CD4-positive, alpha-beta T cell (primary cell): ENCODE measurements at regions of chr9 and their contacts with region 1.

Region 1: GRCh38 chr9:33415501-33416038 is 13.2 kb upstream of the AQP7 start:
- DNase-seq: peak; percentile 91 to 99 (median 95)
- ATAC-seq: peak; percentile 88
- H3K4me3 ChIP-seq: peak overlapping the region; percentile 25
- H3K4me3 Mint-ChIP-seq: peak overlapping the region; percentile 79
- H3K27ac ChIP-seq: peak overlapping the region; percentile 54 to 58
- H3K27ac Mint-ChIP-seq: peak overlapping the region; percentile 93
- H3K4me1 ChIP-seq: peaks cover 64% of the 10 kb centered on the region
- H3K4me1 Mint-ChIP-seq: peaks cover 45% of the 10 kb centered on the region
- H3K27me3 ChIP-seq: no peaks in the 10 kb centered on the region
- H3K27me3 Mint-ChIP-seq: no peaks in the 10 kb centered on the region
- CTCF ChIP-seq: peak; percentile 83

Region 2: GRCh38 chr9:33167046-33167808 is 248.3 kb before region 1 on chr9 and contains the start of gene B4GALT1:
- CTCF ChIA-PET with region 1: no interaction called
- POLR2A ChIA-PET with region 1: no interaction called
- intact Hi-C with region 1: no loop called
- DNase-seq: peak; percentile 90 to 99 (median 97)
- ATAC-seq: peak; percentile 77
- H3K4me3 ChIP-seq: peak within 1 kb of the TSS; percentile 85
- H3K4me3 Mint-ChIP-seq: peak within 1 kb of the TSS; percentile 93
- H3K27ac ChIP-seq: peak within 1 kb of the TSS; percentile 89 to 94
- H3K27ac Mint-ChIP-seq: peak within 1 kb of the TSS; percentile 97
- H3K4me1 ChIP-seq: peaks cover 54% of the 10 kb centered on the region
- H3K4me1 Mint-ChIP-seq: peaks cover 61% of the 10 kb centered on the region
- H3K27me3 ChIP-seq: no peaks in the 10 kb centered on the region
- H3K27me3 Mint-ChIP-seq: no peaks in the 10 kb centered on the region
- CTCF ChIP-seq: no peak
- total RNA-seq, gene B4GALT1: 74.7 to 77.0 TPM

Region 3: GRCh38 chr9:33374634-33375213 is 40.8 kb before region 1 on chr9:
- CTCF ChIA-PET with region 1: interaction called, 21 read pairs
- POLR2A ChIA-PET with region 1: interaction called, 24 read pairs
- intact Hi-C with region 1: loop called in 1 of 2 experiments (anchors 1 kb)
- DNase-seq: peak; percentile 48 to 82 (median 62)
- ATAC-seq: peak; percentile 96
- H3K4me3 ChIP-seq: peak overlapping the region; percentile 17
- H3K4me3 Mint-ChIP-seq: peak overlapping the region; percentile 56
- H3K27ac ChIP-seq: no peak overlapping the region
- H3K27ac Mint-ChIP-seq: peak overlapping the region; percentile 45
- H3K4me1 ChIP-seq: peaks cover 8% of the 10 kb centered on the region
- H3K4me1 Mint-ChIP-seq: peaks cover 16% of the 10 kb centered on the region
- H3K27me3 ChIP-seq: no peaks in the 10 kb centered on the region
- H3K27me3 Mint-ChIP-seq: no peaks in the 10 kb centered on the region
- CTCF ChIP-seq: peak; percentile 86

Region 4: DNA sequence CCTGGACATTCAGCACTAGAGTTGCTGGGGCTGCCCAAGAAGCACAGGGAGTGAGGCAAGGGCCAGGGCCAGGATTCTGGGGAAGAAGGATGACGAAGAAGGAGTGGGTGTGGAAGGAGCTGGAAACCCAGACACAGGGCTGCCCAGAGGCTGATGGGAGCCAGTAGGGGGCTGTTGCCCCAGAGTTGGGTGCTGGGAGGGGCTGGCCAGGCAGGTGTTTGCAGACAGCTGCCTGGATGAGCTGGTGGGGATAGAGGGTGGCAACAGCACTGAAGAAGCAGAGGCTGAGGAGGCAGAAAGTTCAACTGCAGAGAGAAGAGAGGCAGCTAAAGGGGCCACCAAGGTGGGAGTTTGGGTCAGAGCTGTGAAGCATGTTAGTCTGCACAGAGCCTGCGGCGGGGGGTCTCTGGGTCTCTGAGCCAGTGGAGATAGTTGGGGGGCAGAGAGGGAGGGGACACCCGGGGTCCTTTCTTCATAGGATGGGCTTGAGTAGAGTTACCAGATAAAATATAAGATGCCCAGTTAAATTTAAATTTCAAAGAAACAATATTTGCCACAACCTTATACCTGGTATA is 10.7 kb before region 1 on chr9:
- CTCF ChIA-PET with region 1: interaction called, 25 read pairs
- POLR2A ChIA-PET with region 1: interaction called, 24 read pairs
- intact Hi-C with region 1: loop called (anchors 1 kb)
- DNase-seq: peak in 1 of 14 experiments; percentile 11
- ATAC-seq: no peak
- H3K4me3 ChIP-seq: no peak overlapping the region
- H3K4me3 Mint-ChIP-seq: no peak overlapping the region
- H3K27ac ChIP-seq: no peak overlapping the region
- H3K27ac Mint-ChIP-seq: peak overlapping the region; percentile 45
- H3K4me1 ChIP-seq: peaks cover 14% of the 10 kb centered on the region
- H3K4me1 Mint-ChIP-seq: peaks cover 6% of the 10 kb centered on the region
- H3K27me3 ChIP-seq: no peaks in the 10 kb centered on the region
- H3K27me3 Mint-ChIP-seq: no peaks in the 10 kb centered on the region
- CTCF ChIP-seq: no peak

Region 5: DNA sequence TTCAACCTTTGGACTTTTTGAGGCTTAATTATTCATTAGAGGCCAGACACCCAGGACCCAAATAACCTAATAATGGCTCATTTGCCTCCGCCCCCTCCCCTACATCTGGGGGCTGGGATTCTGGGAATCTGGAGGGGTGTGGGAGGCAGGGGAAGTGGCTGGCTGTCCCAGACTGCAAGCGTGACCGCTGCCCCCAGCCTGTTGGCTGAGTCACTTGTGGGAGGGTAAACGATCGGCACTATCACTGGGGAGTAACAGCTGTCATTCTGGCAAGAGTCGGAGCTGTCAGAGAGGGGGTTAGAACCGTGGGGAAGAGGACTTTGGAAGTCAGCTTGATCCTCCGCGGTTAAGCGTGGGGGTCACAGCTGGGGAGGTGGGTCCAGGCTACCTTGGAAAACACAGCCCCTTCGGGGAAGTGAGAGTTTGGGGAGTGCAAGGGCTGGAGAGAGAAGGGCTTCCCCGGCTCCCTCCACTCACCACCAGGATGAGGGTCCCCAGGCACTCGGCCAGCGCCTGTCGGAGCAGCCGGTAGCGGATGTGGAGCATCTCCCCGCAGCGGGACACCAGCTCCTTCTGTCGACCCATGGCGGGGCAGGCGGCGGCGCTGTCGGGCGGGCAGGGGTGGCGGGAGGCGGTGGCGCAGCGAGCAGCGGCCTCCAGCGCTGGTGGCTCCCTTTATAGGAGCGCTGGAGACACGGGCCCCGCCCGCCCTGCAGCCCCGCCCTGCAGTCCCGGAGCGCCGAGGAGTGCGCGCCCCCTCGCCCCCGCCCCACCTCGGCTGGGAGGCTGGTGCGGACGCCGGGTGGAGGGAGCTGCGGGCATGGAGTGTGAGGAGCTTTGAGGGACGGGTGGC is 31.6 kb after region 1 on chr9 and contains the start of gene AQP3:
- CTCF ChIA-PET with region 1: interaction called, 40 read pairs
- POLR2A ChIA-PET with region 1: interaction called, 98 read pairs
- intact Hi-C with region 1: loop called (anchors 1 to 2 kb)
- DNase-seq: peak; percentile 63 to 89 (median 75)
- ATAC-seq: peak; percentile 51
- H3K4me3 ChIP-seq: peak within 1 kb of the TSS; percentile 90
- H3K4me3 Mint-ChIP-seq: peak within 1 kb of the TSS; percentile 97
- H3K27ac ChIP-seq: peak within 1 kb of the TSS; percentile 83 to 91
- H3K27ac Mint-ChIP-seq: peak within 1 kb of the TSS; percentile 99
- H3K4me1 ChIP-seq: peaks cover 69% of the 10 kb centered on the region
- H3K4me1 Mint-ChIP-seq: peaks cover 52% of the 10 kb centered on the region
- H3K27me3 ChIP-seq: no peaks in the 10 kb centered on the region
- H3K27me3 Mint-ChIP-seq: no peaks in the 10 kb centered on the region
- CTCF ChIP-seq: peak; percentile 53
- total RNA-seq, gene AQP3: 99.8 to 106 TPM

Region 6: GRCh38 chr9:33452828-33453271 is 37.3 kb after region 1 on chr9:
- CTCF ChIA-PET with region 1: interaction called, 40 read pairs
- POLR2A ChIA-PET with region 1: interaction called, 98 read pairs
- intact Hi-C with region 1: no loop called
- DNase-seq: peak in 11 of 14 experiments; percentile 27 to 77 (median 52)
- ATAC-seq: peak; percentile 50
- H3K4me3 ChIP-seq: no peak overlapping the region
- H3K4me3 Mint-ChIP-seq: peak overlapping the region; percentile 54
- H3K27ac ChIP-seq: peak overlapping the region; percentile 4 to 21
- H3K27ac Mint-ChIP-seq: peak overlapping the region; percentile 90
- H3K4me1 ChIP-seq: peaks cover 72% of the 10 kb centered on the region
- H3K4me1 Mint-ChIP-seq: peaks cover 60% of the 10 kb centered on the region
- H3K27me3 ChIP-seq: no peaks in the 10 kb centered on the region
- H3K27me3 Mint-ChIP-seq: no peaks in the 10 kb centered on the region
- CTCF ChIP-seq: peak; percentile 70

Region 7: DNA sequence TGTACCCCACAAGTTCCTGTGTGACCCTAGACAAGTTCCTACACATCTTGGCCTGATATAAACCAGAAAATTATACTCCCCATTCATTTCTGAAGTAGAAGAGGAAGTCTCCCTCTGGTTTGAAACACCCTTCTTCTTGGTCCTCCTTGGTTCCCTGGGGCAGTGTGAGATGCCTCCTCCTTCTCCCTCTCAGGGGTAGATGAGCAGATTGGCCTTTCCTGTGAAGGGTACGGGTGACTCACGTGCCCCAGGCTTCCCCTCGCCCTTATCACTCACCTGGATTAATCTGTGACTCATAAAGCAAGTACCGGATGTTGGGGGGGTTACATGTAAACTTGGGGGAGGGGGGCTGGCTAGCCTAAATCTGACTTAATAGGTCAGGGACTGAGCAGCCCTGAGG is 42.9 kb after region 1 on chr9:
- CTCF ChIA-PET with region 1: interaction called, 39 read pairs
- POLR2A ChIA-PET with region 1: interaction called, 24 read pairs
- intact Hi-C with region 1: no loop called
- DNase-seq: peak in 13 of 14 experiments; percentile 47 to 87 (median 66)
- ATAC-seq: peak; percentile 81
- H3K4me3 ChIP-seq: no peak overlapping the region
- H3K4me3 Mint-ChIP-seq: peak overlapping the region; percentile 81
- H3K27ac ChIP-seq: peak overlapping the region; percentile 75 to 80
- H3K27ac Mint-ChIP-seq: peak overlapping the region; percentile 91
- H3K4me1 ChIP-seq: peaks cover 67% of the 10 kb centered on the region
- H3K4me1 Mint-ChIP-seq: peaks cover 48% of the 10 kb centered on the region
- H3K27me3 ChIP-seq: no peaks in the 10 kb centered on the region
- H3K27me3 Mint-ChIP-seq: no peaks in the 10 kb centered on the region
- CTCF ChIP-seq: no peak

Region 8: GRCh38 chr9:33466565-33467495 is 51.3 kb after region 1 on chr9:
- CTCF ChIA-PET with region 1: interaction called, 31 read pairs
- POLR2A ChIA-PET with region 1: interaction called, 18 read pairs
- intact Hi-C with region 1: no loop called
- DNase-seq: peak; percentile 62 to 86 (median 77)
- ATAC-seq: peak; percentile 86
- H3K4me3 ChIP-seq: no peak overlapping the region
- H3K4me3 Mint-ChIP-seq: no peak overlapping the region
- H3K27ac ChIP-seq: peak overlapping the region in 1 of 2 donors; percentile 21
- H3K27ac Mint-ChIP-seq: peak overlapping the region; percentile 47
- H3K4me1 ChIP-seq: peaks cover 15% of the 10 kb centered on the region
- H3K4me1 Mint-ChIP-seq: peaks cover 8% of the 10 kb centered on the region
- H3K27me3 ChIP-seq: no peaks in the 10 kb centered on the region
- H3K27me3 Mint-ChIP-seq: no peaks in the 10 kb centered on the region
- CTCF ChIP-seq: peak; percentile 96